CD4-positive, alpha-beta memory T cell (primary cell): ENCODE measurements at regions of chr17 and their contacts with region 1.

Region 1: GRCh38 chr17:7239091-7240027 is at the start of gene PHF23:
- DNase-seq: peak; percentile 97 to 98 (median 98)
- H3K4me3 ChIP-seq: peak within 1 kb of the TSS; percentile 85 to 86
- H3K4me3 Mint-ChIP-seq: peak within 1 kb of the TSS; percentile 94 to 99 (median 96)
- H3K27ac ChIP-seq: peak within 1 kb of the TSS; percentile 85
- H3K27ac Mint-ChIP-seq: peak within 1 kb of the TSS; percentile 90 to 100 (median 98)
- H3K4me1 ChIP-seq: peaks cover 61% of the 10 kb centered on the region
- H3K4me1 Mint-ChIP-seq: peaks cover 41 to 75% (median 54%) of the 10 kb centered on the region in 4 donors
- H3K27me3 ChIP-seq: no peaks in the 10 kb centered on the region
- H3K27me3 Mint-ChIP-seq: peaks cover 0 to 2% of the 10 kb centered on the region in 2 donors
- total RNA-seq, gene PHF23: 45.8 to 55.8 TPM

Region 2: DNA sequence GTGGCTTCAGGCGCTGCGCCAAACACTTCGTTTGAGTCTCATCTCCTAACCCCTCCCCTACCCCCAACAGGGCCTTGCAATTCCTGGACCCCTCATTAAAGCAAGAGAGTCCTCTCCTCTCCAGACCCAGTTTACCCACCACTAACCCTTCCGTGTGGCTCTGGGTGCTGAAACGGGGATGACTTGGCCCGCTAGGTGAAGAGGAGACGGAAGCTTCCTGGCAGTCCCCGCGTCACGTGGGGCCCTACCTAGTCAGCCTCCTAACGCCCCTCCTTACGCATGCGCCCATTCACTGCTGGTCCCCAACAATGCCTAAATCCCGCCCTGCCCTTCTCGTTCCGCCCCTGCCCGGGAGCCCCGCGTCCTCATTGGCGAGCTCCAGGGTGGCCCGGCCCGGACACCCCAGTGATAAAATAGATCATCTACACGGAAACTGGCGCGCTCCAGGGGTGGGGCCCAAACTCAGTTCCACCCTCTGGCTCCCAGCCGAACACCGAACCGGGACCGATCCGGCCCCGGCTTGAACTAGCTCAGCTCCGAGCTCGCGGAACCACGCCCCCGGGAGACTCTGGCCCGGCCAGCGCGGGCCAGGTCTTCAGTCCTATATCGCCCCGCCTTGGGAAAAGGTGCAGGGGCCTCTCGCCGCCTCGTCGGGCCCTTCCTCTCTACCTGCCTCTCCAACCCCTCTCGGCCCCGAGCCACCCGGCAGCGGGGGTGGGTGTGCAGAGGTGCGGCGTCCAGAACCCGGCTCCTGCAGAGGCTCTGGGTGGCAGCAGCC is 203.6 kb before region 1 on chr17 and contains the start of gene SLC16A13:
- CTCF ChIA-PET with region 1: no interaction called
- POLR2A ChIA-PET with region 1: interaction called, 16 read pairs
- intact Hi-C with region 1: no loop called
- DNase-seq: peak; percentile 97 to 100 (median 98)
- H3K4me3 ChIP-seq: peak within 1 kb of the TSS; percentile 32 to 81
- H3K4me3 Mint-ChIP-seq: peak within 1 kb of the TSS; percentile 90 to 96 (median 94)
- H3K27ac ChIP-seq: peak within 1 kb of the TSS; percentile 87
- H3K27ac Mint-ChIP-seq: peak within 1 kb of the TSS; percentile 97 to 99 (median 98)
- H3K4me1 ChIP-seq: peaks cover 65% of the 10 kb centered on the region
- H3K4me1 Mint-ChIP-seq: peaks cover 25 to 81% (median 49%) of the 10 kb centered on the region in 4 donors
- H3K27me3 ChIP-seq: no peaks in the 10 kb centered on the region
- H3K27me3 Mint-ChIP-seq: no peaks in the 10 kb centered on the region
- total RNA-seq, gene SLC16A13: 13.1 to 13.7 TPM

Region 3: GRCh38 chr17:7214300-7215135 is 24.8 kb before region 1 on chr17:
- CTCF ChIA-PET with region 1: interaction called, 48 read pairs
- POLR2A ChIA-PET with region 1: interaction called, 435 read pairs
- intact Hi-C with region 1: loop called (anchors 1 kb)
- DNase-seq: peak; percentile 97 to 99 (median 98)
- H3K4me3 ChIP-seq: peak overlapping the region; percentile 68 to 73
- H3K4me3 Mint-ChIP-seq: peak overlapping the region; percentile 90 to 98 (median 93)
- H3K27ac ChIP-seq: peak overlapping the region; percentile 96
- H3K27ac Mint-ChIP-seq: peak overlapping the region; percentile 98 to 100 (median 100)
- H3K4me1 ChIP-seq: peaks cover 54% of the 10 kb centered on the region
- H3K4me1 Mint-ChIP-seq: peaks cover 26 to 67% (median 43%) of the 10 kb centered on the region in 4 donors
- H3K27me3 ChIP-seq: no peaks in the 10 kb centered on the region
- H3K27me3 Mint-ChIP-seq: peaks cover 0 to 13% of the 10 kb centered on the region in 2 donors

Region 4: GRCh38 chr17:7252176-7253043 is 13.1 kb after region 1 on chr17 and contains the start of gene ELP5:
- CTCF ChIA-PET with region 1: interaction called, 3 read pairs
- POLR2A ChIA-PET with region 1: interaction called, 115 read pairs
- intact Hi-C with region 1: loop called (anchors 1 kb)
- DNase-seq: peak in 4 of 5 donors; percentile 86 to 92 (median 88)
- H3K4me3 ChIP-seq: peak within 1 kb of the TSS; percentile 71 to 92
- H3K4me3 Mint-ChIP-seq: peak within 1 kb of the TSS; percentile 91 to 97 (median 95)
- H3K27ac ChIP-seq: peak within 1 kb of the TSS; percentile 98
- H3K27ac Mint-ChIP-seq: peak within 1 kb of the TSS; percentile 98 to 100 (median 99)
- H3K4me1 ChIP-seq: peaks cover 37% of the 10 kb centered on the region
- H3K4me1 Mint-ChIP-seq: peaks cover 25 to 49% (median 38%) of the 10 kb centered on the region in 4 donors
- H3K27me3 ChIP-seq: no peaks in the 10 kb centered on the region
- H3K27me3 Mint-ChIP-seq: no peaks in the 10 kb centered on the region
- total RNA-seq, gene ELP5: 29.8 to 30.9 TPM

Region 5: DNA sequence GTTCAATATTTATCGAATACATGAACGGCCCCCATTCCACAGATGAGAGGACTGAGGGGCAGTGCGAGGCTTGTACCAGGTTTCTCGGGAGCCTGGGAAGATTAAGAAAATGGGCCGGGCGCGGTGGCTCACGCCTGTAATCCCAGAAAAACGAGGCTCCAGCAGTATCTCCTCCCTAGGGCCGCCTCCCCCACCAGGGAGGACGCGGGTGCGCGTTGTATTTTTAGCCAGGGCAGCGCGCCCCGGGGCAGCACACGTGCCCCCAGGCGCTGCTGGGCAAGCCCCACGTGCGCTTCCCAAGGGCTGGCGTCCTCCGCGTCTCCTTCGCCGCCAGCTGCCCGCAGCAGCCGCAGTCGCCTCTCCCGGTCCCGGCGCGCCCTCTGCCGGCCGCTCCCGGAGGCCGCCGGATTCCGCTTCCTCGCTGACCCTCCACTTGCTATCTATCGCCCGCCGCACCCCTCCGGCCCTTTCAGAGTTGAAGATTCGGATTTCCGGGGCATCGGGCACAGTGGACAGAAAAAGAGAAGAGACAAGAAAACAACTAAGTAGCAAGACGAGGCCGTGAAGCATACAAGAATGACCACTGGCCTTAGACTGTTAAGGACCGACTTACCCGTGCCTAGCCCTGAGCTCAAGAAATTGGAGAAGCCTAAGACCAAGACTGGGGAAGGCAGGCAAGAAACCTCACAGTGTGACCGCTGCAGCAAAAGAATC is 57.0 kb after region 1 on chr17:
- CTCF ChIA-PET with region 1: interaction called, 7 read pairs
- POLR2A ChIA-PET with region 1: interaction called, 11 read pairs
- intact Hi-C with region 1: no loop called
- DNase-seq: peak; percentile 41 to 62 (median 51)
- H3K4me3 ChIP-seq: no peak overlapping the region
- H3K4me3 Mint-ChIP-seq: peak overlapping the region in 6 of 8 donors; percentile 8 to 86 (median 50)
- H3K27ac ChIP-seq: no peak overlapping the region
- H3K27ac Mint-ChIP-seq: peak overlapping the region in 3 of 7 donors; percentile 55 to 60 (median 59)
- H3K4me1 ChIP-seq: peaks cover 26% of the 10 kb centered on the region
- H3K4me1 Mint-ChIP-seq: peaks cover 7 to 31% (median 18%) of the 10 kb centered on the region in 4 donors
- H3K27me3 ChIP-seq: no peaks in the 10 kb centered on the region
- H3K27me3 Mint-ChIP-seq: peaks cover 2 to 19% of the 10 kb centered on the region in 2 donors